OCI-LY7 (cell line): ENCODE measurements at regions of chr1 and their contacts with region 1.

Region 1: DNA sequence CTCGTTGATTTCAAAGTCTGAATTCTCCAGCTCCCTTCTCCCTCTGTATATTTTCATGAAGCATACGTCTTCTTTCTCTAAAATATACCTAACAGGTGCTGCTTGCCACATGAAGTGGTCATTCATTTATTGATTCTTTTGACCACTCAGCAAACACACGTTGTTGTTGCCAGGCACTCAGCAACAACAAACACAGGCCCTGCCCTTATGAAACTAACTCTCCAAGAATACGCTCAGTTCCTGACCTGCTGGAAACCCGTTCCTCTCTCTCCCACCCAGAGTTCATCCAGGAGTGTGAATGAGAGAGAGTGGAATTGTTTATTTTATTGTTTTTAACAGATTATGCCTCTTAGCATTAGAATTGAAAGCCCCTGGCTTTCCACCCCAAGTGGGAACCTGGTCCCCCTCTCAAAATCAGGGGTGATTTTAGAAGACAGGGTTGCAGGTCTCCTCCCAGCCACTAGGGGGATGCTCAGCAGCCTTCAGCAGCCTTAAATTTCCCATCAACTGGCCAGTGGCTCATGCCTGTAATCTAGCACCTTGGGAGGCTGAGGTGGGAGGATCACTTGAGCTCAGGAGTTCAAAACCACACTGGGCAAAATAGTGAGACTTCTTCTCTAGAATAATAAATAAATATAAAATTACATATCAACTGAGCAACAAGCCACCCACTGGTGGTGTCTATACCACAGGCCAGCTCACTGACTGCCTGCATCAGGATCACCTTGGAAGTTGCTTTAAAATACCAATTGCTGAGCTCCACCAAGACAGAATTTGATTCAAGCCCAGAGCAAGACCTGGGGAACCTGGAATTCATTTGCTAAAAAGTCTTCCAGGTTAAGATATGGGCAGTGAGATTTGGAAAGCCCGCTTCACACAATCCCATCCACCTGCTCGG is 181.0 kb upstream of the KLHDC7A start:
- DNase-seq: peak; percentile 65
- H3K4me3 ChIP-seq: no peak overlapping the region
- H3K27ac ChIP-seq: no peak overlapping the region
- H3K4me1 ChIP-seq: no peaks in the 10 kb centered on the region
- CTCF ChIP-seq: peak; percentile 92

Region 2: DNA sequence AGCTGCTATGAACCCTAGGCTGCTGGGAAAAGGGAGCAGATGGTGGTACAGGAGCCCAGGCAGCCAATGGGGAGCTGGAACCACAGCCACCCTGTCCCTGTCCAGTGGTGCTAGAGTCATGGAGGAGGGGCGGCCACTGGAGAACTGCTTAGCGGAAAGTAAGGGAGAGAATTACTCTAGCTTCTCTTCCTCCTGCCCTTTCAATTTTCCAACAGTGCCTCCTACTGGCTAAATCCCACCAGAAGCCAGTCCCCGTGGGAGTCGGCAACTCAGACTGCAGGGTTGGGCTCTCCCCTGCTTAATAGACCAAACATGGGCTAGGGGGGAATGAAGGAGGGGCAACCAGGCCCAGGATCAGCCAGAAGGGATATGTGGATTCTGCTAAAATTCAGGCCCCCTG is 390.1 kb before region 1 on chr1:
- CTCF ChIA-PET with region 1: no interaction called
- POLR2A ChIA-PET with region 1: no interaction called
- intact Hi-C with region 1: no loop called
- DNase-seq: no peak
- H3K4me3 ChIP-seq: no peak overlapping the region
- H3K27ac ChIP-seq: no peak overlapping the region
- H3K4me1 ChIP-seq: no peaks in the 10 kb centered on the region
- CTCF ChIP-seq: 0 out of 2 replicates have a peak, but pooled peaks have one; percentile 33

Region 3: DNA sequence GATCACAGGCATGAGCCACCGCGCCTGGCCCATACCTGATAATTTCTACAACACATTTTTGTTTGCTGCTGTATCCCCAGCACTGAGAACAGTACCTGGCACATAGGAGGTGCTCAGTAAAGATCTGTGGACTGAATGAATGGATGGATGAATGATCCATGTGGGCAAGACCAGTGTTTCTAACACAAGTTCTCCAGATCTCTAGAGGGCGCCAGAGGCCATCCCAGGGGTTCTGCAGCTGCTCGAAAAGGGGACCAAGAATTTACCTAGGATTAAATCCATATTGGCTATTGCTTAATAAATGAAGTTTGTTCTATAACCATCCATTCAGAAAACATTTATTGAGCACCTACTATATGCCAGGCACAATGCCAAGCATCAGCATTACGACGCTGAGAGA is 376.9 kb before region 1 on chr1:
- CTCF ChIA-PET with region 1: no interaction called
- POLR2A ChIA-PET with region 1: no interaction called
- intact Hi-C with region 1: loop called (anchors 2 kb)
- DNase-seq: peak; percentile 61
- H3K4me3 ChIP-seq: no peak overlapping the region
- H3K27ac ChIP-seq: no peak overlapping the region
- H3K4me1 ChIP-seq: no peaks in the 10 kb centered on the region
- CTCF ChIP-seq: peak; percentile 85

Region 4: GRCh38 chr1:17984583-17984982 is 315.1 kb before region 1 on chr1:
- CTCF ChIA-PET with region 1: no interaction called
- POLR2A ChIA-PET with region 1: no interaction called
- intact Hi-C with region 1: loop called (anchors 5 kb)
- DNase-seq: peak; percentile 54
- H3K4me3 ChIP-seq: no peak overlapping the region
- H3K27ac ChIP-seq: no peak overlapping the region
- H3K4me1 ChIP-seq: no peaks in the 10 kb centered on the region
- CTCF ChIP-seq: peak; percentile 91

Region 5: GRCh38 chr1:18530587-18531502 is 231.2 kb after region 1 on chr1:
- CTCF ChIA-PET with region 1: no interaction called
- POLR2A ChIA-PET with region 1: interaction called, 3 read pairs
- intact Hi-C with region 1: loop called (anchors 5 kb)
- DNase-seq: peak; percentile 60
- H3K4me3 ChIP-seq: no peak overlapping the region
- H3K27ac ChIP-seq: no peak overlapping the region
- H3K4me1 ChIP-seq: peaks cover 46% of the 10 kb centered on the region
- CTCF ChIP-seq: peak; percentile 89

Region 6: GRCh38 chr1:18581420-18581880 is 281.8 kb after region 1 on chr1:
- CTCF ChIA-PET with region 1: interaction called, 3 read pairs
- POLR2A ChIA-PET with region 1: no interaction called
- intact Hi-C with region 1: loop called (anchors 2 kb)
- DNase-seq: peak; percentile 56
- H3K4me3 ChIP-seq: no peak overlapping the region
- H3K27ac ChIP-seq: no peak overlapping the region
- H3K4me1 ChIP-seq: no peaks in the 10 kb centered on the region
- CTCF ChIP-seq: peak; percentile 82

Region 7: DNA sequence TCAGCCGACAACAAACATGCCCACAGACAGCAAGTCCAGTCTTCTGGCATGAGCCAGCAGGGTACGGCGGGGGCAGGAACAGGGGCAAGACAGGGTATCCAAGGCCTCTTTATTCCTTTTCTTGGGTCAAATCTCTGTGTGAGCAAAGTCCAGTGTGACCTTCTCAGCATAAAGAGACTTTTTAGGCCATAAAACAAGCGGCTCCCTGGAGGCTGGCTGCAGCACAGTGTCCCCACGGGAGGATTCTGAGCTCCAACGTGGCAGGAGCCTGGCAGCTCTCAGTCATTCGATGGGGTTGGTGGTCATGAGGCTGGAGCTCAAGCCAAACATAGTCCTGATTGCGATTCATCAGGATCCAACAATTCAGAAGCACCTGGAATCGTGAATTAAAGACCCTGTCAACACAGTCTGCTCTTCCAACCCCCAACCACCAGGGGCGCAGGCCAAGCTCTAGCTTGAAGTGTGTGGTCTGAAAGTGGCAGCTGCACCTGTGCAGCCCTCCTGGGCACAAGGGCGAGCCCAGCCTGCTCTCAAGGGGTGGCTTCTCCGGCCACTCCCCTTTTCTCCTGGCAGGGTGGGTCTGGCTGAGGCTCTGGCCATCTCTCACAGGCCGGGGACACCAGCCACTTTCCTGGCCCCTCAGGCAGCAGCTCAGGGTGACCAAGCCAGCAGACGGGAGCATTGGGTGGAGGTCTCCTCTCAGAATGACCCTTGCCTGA is 1074.6 kb after region 1 on chr1:
- CTCF ChIA-PET with region 1: no interaction called
- POLR2A ChIA-PET with region 1: no interaction called
- intact Hi-C with region 1: no loop called
- DNase-seq: peak; percentile 19
- H3K4me3 ChIP-seq: no peak overlapping the region
- H3K27ac ChIP-seq: no peak overlapping the region
- H3K4me1 ChIP-seq: no peaks in the 10 kb centered on the region
- CTCF ChIP-seq: peak; percentile 44; the same call in 1 of the 2 replicates